ENCODE measurements at regions of chr3 and their contacts with region 1.

Region 1: DNA sequence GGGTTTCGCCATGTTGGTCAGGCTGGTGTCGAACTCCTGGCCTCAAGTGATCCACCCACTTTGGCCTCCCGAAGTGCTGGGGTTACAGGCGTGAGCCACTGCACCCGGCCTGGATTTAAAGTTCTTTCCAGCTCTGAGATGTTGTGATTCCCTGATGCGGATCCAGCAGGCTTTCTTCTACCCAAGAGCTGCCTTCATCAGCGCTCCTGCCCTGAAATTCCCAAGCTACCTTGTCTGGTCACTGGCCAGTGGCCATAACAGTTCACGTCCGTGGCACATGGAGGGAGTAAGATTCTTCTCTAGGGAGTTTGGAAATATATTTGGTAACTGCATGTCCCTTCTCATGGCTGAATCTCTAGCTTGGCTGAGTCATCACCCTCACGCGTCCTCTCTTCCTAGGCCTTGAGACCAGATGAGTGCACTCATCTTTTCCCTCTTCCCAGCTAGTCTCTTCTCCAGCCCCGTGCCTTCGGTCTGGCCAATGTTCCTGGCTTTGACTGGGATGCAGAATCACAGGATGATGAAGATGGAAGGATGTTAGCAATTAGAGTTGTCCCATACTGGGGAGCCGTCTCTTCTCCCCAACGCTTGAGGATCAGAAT is 29.8 kb upstream of the APOD start:
- DNase-seq: peak; percentile 6
- ATAC-seq: no peak
- H3K4me3 ChIP-seq: no peak overlapping the region
- H3K27ac ChIP-seq: no peak overlapping the region
- H3K4me1 ChIP-seq: no peaks in the 10 kb centered on the region
- H3K27me3 ChIP-seq: peaks cover 7% of the 10 kb centered on the region; the same call in 1 of the 2 replicates
- CTCF ChIP-seq: no peak
- POLR2A ChIP-seq: no peak
- RAD21 ChIP-seq: no peak

Region 2: DNA sequence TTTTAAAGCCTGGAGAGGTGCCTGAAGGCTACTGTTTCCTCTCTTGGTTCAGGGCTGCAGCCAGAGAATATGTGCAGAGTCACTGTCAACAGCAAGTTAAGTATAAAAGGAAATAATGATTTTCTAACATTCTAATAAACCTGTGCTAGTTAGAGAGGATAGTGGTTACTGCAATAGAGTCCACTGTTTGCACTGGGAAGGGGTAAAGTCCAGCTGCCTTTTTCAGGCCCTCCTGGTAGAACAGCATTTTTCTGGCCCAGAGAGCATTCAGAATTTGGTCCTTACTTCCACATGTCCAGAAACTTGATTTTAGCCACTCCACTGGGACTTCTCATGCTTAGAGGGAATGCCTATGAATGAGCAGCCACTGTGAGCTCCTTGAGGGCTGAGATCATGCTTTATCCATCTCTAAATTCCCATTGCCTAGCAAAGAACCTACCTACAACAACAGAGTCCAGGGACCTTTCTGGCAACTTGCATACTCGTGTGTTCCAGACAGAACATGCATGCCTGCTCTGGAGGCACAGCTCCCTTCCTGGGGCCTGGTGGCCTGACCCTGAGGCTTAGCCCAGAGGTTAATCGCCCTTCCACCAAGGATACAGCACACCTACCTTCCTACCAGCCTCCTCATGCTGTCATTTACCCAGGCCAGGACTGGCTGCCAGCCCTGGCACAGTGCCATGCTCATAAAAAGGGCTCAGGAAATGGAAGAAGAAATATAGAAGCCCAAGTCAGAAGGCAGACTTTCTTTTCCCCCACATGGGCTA is 1076.5 kb before region 1 on chr3:
- CTCF ChIA-PET with region 1: no interaction called
- POLR2A ChIA-PET with region 1: no interaction called
- dilution Hi-C with region 1: no loop called
- in situ Hi-C with region 1: no loop called
- intact Hi-C with region 1: no loop called
- DNase-seq: peak; percentile 28
- ATAC-seq: peak; percentile 45
- H3K4me3 ChIP-seq: no peak overlapping the region
- H3K27ac ChIP-seq: 0 out of 2 replicates have a peak overlapping the region, but pooled peaks have one; percentile 4
- H3K4me1 ChIP-seq: peaks cover 11% of the 10 kb centered on the region
- H3K27me3 ChIP-seq: no peaks in the 10 kb centered on the region
- CTCF ChIP-seq: no peak
- POLR2A ChIP-seq: no peak
- RAD21 ChIP-seq: no peak

Region 3: GRCh38 chr3:195716865-195717210 is 103.3 kb after region 1 on chr3:
- CTCF ChIA-PET with region 1: no interaction called
- POLR2A ChIA-PET with region 1: no interaction called
- dilution Hi-C with region 1: no loop called
- in situ Hi-C with region 1: no loop called
- intact Hi-C with region 1: loop called (anchors 2 kb)
- DNase-seq: peak; percentile 42
- ATAC-seq: peak; percentile 40; the same call in 1 of the 2 replicates
- H3K4me3 ChIP-seq: no peak overlapping the region
- H3K27ac ChIP-seq: no peak overlapping the region
- H3K4me1 ChIP-seq: no peaks in the 10 kb centered on the region
- H3K27me3 ChIP-seq: peaks cover 19% of the 10 kb centered on the region
- CTCF ChIP-seq: no peak
- POLR2A ChIP-seq: no peak
- RAD21 ChIP-seq: no peak

Region 4: GRCh38 chr3:195727606-195728195 is 114.1 kb after region 1 on chr3:
- CTCF ChIA-PET with region 1: no interaction called
- POLR2A ChIA-PET with region 1: no interaction called
- dilution Hi-C with region 1: no loop called
- in situ Hi-C with region 1: loop called (anchors 5 kb)
- intact Hi-C with region 1: no loop called
- DNase-seq: no peak
- ATAC-seq: no peak
- H3K4me3 ChIP-seq: no peak overlapping the region
- H3K27ac ChIP-seq: no peak overlapping the region
- H3K4me1 ChIP-seq: no peaks in the 10 kb centered on the region
- H3K27me3 ChIP-seq: peaks cover 33% of the 10 kb centered on the region
- CTCF ChIP-seq: no peak
- POLR2A ChIP-seq: no peak
- RAD21 ChIP-seq: no peak

Region 5: DNA sequence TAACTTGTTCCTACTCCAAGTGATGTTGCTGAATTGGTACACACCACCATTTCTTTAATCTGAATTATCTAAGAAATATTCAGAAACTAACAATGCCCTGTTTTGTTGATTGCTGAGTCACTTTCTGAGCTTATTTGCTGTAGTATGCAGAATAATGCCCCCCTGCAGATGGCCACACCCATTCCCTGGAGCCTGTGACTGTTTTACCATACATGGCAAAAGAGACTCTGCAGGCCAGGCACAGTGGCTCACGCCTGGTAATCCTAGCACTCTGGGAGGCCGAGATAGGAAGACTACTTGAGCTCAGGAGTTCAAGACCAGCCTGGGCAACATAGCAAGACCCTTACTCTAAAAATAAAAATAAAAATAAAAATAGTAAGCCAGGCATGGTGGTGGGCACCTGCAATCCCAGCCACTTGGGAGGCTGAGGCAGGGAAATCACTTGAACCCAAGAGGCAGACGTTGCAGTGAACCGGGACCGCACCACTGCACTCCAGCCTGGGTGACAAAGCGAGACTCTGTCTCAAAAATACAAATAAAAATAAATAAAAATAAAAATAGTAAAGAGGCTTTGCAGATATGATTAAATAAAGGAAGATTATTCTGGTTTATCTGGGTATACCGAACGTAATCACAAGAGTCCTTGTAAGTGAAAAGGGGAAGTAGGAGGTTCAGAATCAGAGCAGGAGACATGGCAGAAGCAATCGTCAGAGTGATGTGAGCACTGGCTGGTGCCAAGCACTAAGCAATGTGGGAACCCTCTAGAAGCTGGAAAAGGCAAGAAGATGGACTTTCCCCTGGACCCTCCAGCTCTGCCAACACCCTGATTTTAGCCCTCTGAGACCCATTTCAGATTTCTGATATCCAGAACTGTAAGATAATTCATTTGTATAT is 654.9 kb after region 1 on chr3:
- CTCF ChIA-PET with region 1: no interaction called
- POLR2A ChIA-PET with region 1: no interaction called
- dilution Hi-C with region 1: no loop called
- in situ Hi-C with region 1: no loop called
- intact Hi-C with region 1: no loop called
- DNase-seq: peak; percentile 75
- ATAC-seq: peak; percentile 96
- H3K4me3 ChIP-seq: no peak overlapping the region
- H3K27ac ChIP-seq: peak overlapping the region; percentile 92
- H3K4me1 ChIP-seq: peaks cover 4% of the 10 kb centered on the region
- H3K27me3 ChIP-seq: no peaks in the 10 kb centered on the region
- CTCF ChIP-seq: no peak
- POLR2A ChIP-seq: no peak
- RAD21 ChIP-seq: no peak

Measured in IMR-90 (cell line).